ENCODE measurements at regions of chr6 and their contacts with region 1.

Region 1: GRCh38 chr6:152124429-152125074 is 317.1 kb downstream of the ESR1 start:
- DNase-seq: no peak
- H3K4me3 ChIP-seq: no peak overlapping the region
- H3K27ac ChIP-seq: peak overlapping the region; percentile 44
- H3K4me1 ChIP-seq: peaks cover 15% of the 10 kb centered on the region
- H3K27me3 ChIP-seq: no peaks in the 10 kb centered on the region
- CTCF ChIP-seq: peak; percentile 33 to 87 (median 74)
- POLR2A ChIP-seq: no peak

Region 2: GRCh38 chr6:151690768-151691562 is 433.6 kb before region 1 on chr6:
- intact Hi-C with region 1: loop called (anchors 5 kb)
- DNase-seq: no peak
- H3K4me3 ChIP-seq: peak overlapping the region; percentile 32 to 45
- H3K27ac ChIP-seq: peak overlapping the region; percentile 79
- H3K4me1 ChIP-seq: peaks cover 14% of the 10 kb centered on the region
- H3K27me3 ChIP-seq: no peaks in the 10 kb centered on the region
- CTCF ChIP-seq: no peak
- POLR2A ChIP-seq: no peak

Region 3: DNA sequence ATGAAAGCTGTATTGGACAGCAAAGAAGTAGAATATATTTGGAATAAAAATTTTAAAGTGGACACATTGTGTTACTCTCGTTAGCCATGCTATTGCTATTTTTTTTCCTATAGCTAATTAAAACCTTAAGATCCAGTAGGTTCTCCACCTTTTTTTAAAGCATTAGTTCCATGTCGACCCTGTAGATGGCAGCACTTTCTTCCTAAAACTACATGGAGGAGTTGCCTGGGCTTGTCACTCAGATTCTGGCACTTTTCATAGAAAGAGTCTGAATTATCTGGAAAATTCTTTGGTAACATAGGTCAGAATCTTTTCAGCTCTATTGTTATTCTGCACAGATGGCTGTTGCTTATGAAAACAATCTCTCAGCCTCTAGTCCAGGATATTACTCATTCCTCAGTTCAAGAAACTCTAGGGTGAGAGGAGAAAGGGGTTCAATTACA is 359.1 kb before region 1 on chr6:
- intact Hi-C with region 1: loop called (anchors 10 kb)
- DNase-seq: no peak
- H3K4me3 ChIP-seq: no peak overlapping the region
- H3K27ac ChIP-seq: peak overlapping the region; percentile 67
- H3K4me1 ChIP-seq: peaks cover 5% of the 10 kb centered on the region
- H3K27me3 ChIP-seq: no peaks in the 10 kb centered on the region
- CTCF ChIP-seq: peak; percentile 50 to 67 (median 64)
- POLR2A ChIP-seq: no peak

Region 4: GRCh38 chr6:152267967-152268845 is 143.7 kb after region 1 on chr6:
- intact Hi-C with region 1: loop called (anchors 5 kb)
- DNase-seq: no peak
- H3K4me3 ChIP-seq: peak overlapping the region in 1 of 2 donors; percentile 18
- H3K27ac ChIP-seq: peak overlapping the region; percentile 73
- H3K4me1 ChIP-seq: peaks cover 51% of the 10 kb centered on the region
- H3K27me3 ChIP-seq: no peaks in the 10 kb centered on the region
- CTCF ChIP-seq: peak in 2 of 3 experiments; percentile 16 to 37
- POLR2A ChIP-seq: no peak

Region 5: GRCh38 chr6:152625213-152625612 is 500.7 kb after region 1 on chr6:
- intact Hi-C with region 1: no loop called
- DNase-seq: no peak
- H3K4me3 ChIP-seq: no peak overlapping the region
- H3K27ac ChIP-seq: no peak overlapping the region
- H3K4me1 ChIP-seq: no peaks in the 10 kb centered on the region
- H3K27me3 ChIP-seq: no peaks in the 10 kb centered on the region
- CTCF ChIP-seq: no peak
- POLR2A ChIP-seq: no peak